Heart right ventricle (tissue), 16 donors: ENCODE measurements at regions of chr10 and their contacts with region 1.

Region 1: DNA sequence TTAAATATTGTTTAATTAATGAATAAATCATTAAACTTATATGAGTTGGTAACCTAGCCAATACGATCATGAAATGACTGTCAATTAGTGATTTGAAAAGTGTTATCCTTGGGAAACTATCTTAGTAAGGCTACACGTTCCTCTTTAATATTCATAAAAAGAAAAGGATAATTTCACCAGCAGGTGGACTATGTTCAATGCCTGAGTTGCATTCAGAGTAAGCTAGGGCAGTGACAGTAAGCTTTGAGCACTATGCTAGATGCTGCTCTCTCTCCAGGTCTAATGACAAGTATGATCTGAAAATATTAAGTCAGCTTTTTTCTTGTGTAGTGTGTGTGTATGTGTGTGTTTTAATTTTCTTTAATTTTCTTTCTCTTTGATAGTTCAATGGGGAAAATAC is 486.3 kb upstream of the PCDH15 start:
- DNase-seq: no peak
- ATAC-seq: peak in 1 of 8 donors; percentile 47
- H3K4me3 ChIP-seq: no peak overlapping the region
- H3K27ac ChIP-seq: no peak overlapping the region
- H3K4me1 ChIP-seq: no peaks in the 10 kb centered on the region
- H3K27me3 ChIP-seq: no peaks in the 10 kb centered on the region
- CTCF ChIP-seq: peak in 6 of 9 donors; percentile 8 to 44 (median 29)

Region 2: GRCh38 chr10:55024713-55025112 is 262.6 kb before region 1 on chr10:
- intact Hi-C with region 1: no loop called
- DNase-seq: peak in 1 of 2 donors; percentile 10
- ATAC-seq: no peak
- H3K4me3 ChIP-seq: no peak overlapping the region
- H3K27ac ChIP-seq: no peak overlapping the region
- H3K4me1 ChIP-seq: peaks cover 0 to 6% (median 0%) of the 10 kb centered on the region in 9 donors
- H3K27me3 ChIP-seq: no peaks in the 10 kb centered on the region
- CTCF ChIP-seq: no peak

Region 3: DNA sequence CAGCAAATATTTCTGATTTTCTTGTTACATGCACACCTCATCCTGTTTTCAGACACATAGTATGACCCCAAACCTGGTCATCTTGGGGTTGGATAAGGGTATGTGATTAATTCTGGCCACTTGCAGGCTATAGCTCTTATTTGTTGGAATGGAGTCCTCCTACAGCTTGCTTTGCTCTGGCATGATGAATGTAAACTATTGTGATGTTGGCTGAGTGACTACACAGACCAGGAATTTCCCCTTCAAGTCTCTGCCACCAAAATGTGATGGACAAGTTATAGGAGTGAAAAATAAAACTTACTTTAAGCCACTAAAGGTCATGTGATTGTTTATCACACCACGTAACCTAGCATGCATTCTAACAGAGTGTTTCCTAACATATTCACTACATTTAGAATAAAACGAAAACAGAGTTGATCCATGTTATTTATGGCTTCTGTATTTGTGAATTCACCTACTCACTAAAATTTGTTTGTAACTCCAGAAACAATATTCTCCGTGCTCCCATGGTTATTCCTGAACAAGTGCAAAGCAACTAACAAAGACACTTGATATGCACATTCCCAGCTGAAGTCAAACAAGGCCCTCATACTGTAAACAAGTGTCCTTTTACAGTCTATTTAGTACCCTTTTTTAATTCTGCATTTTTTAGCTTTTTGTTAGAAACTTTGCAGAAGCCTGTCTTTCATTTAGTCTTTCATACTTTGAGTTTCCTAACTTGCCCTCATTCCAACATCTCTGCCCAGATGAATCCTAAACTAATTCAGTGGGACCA is 112.9 kb after region 1 on chr10:
- intact Hi-C with region 1: loop called in 1 of 10 experiments (anchors 10 kb)
- DNase-seq: no peak
- ATAC-seq: no peak
- H3K4me3 ChIP-seq: no peak overlapping the region
- H3K27ac ChIP-seq: no peak overlapping the region
- H3K4me1 ChIP-seq: no peaks in the 10 kb centered on the region
- H3K27me3 ChIP-seq: no peaks in the 10 kb centered on the region
- CTCF ChIP-seq: no peak

Region 4: DNA sequence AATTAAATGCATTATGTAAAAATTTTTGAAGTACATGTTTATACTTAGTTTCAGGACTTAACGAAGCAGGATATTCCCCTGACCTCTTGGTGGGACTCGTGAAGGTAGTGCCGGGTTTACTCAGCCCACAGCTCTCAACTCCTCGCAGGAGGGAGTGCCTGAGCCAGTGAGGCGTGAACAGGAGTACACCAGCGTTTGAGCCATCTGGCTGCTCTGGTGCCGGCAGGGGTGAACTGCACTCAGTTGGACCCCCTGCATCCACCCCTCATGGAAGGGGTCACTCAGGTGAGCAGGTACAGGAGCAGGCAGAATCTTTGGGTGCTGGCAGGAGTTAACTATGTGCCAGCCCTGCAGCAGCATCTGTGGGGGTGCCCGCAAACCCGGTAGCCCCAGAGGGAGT is 138.8 kb after region 1 on chr10:
- intact Hi-C with region 1: no loop called
- DNase-seq: peak in 1 of 2 donors; percentile 7
- ATAC-seq: no peak
- H3K4me3 ChIP-seq: no peak overlapping the region
- H3K27ac ChIP-seq: no peak overlapping the region
- H3K4me1 ChIP-seq: no peaks in the 10 kb centered on the region
- H3K27me3 ChIP-seq: no peaks in the 10 kb centered on the region
- CTCF ChIP-seq: no peak

Region 5: DNA sequence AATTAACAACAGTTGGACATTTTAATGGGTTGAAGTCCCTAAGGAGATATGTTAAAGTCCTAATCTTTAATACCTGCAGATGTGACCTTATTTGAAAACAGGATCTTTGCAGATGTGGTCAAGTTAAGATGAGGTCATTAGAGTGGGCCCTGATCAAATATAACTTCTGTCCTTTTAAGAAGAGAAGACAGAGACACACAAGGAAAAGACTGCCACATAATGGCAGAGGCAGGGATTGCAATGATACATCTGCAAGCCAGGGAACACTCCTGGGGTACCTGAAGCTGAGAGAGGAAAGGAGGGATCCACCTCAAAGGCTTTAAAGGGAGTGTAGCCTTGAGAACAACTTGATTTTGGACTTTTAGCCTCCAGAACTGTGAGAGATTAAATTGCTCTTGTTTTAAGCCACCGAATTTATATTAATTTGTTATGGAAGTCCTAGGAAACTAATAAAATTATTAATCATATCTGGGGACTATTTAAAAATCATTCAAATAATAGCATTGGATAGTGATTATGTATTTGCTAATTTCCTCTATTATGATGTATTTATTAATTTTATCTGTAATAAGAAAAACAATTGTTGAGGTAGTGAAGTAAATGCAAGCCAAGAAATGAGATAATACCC is 213.7 kb after region 1 on chr10:
- intact Hi-C with region 1: loop called in 2 of 10 experiments (anchors 2 to 5 kb)
- DNase-seq: peak in 1 of 2 donors; percentile 17
- ATAC-seq: no peak
- H3K4me3 ChIP-seq: no peak overlapping the region
- H3K27ac ChIP-seq: no peak overlapping the region
- H3K4me1 ChIP-seq: no peaks in the 10 kb centered on the region
- H3K27me3 ChIP-seq: no peaks in the 10 kb centered on the region
- CTCF ChIP-seq: peak; percentile 19 to 80 (median 64)